A549 (cell line): ENCODE measurements at regions of chr20 and their contacts with region 1.

Region 1: GRCh38 chr20:38057351-38057972 is 23.9 kb downstream of the RPRD1B start:
- DNase-seq: peak; percentile 81 to 82
- ATAC-seq: peak; percentile 94 to 99
- H3K4me3 ChIP-seq: no peak overlapping the region
- H3K27ac ChIP-seq: peak overlapping the region; percentile 29 to 47; a peak in 1 of 6 replicates
- H3K4me1 ChIP-seq: peaks cover 26% of the 10 kb centered on the region
- CTCF ChIP-seq: peak; percentile 96
- EP300 ChIP-seq: no peak
- POLR2A ChIP-seq: no peak
- RAD21 ChIP-seq: peak; percentile 96 to 98

Region 2: GRCh38 chr20:38043512-38044300 is 13.8 kb before region 1 on chr20:
- CTCF ChIA-PET with region 1: interaction called, 37 read pairs
- POLR2A ChIA-PET with region 1: interaction called, 3 read pairs
- DNase-seq: peak; percentile 73 to 80
- ATAC-seq: peak; percentile 99 to 100
- H3K4me3 ChIP-seq: no peak overlapping the region
- H3K27ac ChIP-seq: peak overlapping the region in 1 of 2 experiments; percentile 41; a peak in 2 of 6 replicates
- H3K4me1 ChIP-seq: peaks cover 15% of the 10 kb centered on the region
- CTCF ChIP-seq: no peak
- EP300 ChIP-seq: no peak
- POLR2A ChIP-seq: no peak
- RAD21 ChIP-seq: no peak

Region 3: GRCh38 chr20:38079353-38079752 is 21.9 kb after region 1 on chr20:
- CTCF ChIA-PET with region 1: interaction called, 12 read pairs
- POLR2A ChIA-PET with region 1: no interaction called
- DNase-seq: no peak
- ATAC-seq: no peak
- H3K4me3 ChIP-seq: no peak overlapping the region
- H3K27ac ChIP-seq: no peak overlapping the region
- H3K4me1 ChIP-seq: peaks cover 8% of the 10 kb centered on the region; the same call in 2 of the 3 replicates
- CTCF ChIP-seq: no peak
- EP300 ChIP-seq: no peak
- POLR2A ChIP-seq: no peak
- RAD21 ChIP-seq: no peak

Region 4: DNA sequence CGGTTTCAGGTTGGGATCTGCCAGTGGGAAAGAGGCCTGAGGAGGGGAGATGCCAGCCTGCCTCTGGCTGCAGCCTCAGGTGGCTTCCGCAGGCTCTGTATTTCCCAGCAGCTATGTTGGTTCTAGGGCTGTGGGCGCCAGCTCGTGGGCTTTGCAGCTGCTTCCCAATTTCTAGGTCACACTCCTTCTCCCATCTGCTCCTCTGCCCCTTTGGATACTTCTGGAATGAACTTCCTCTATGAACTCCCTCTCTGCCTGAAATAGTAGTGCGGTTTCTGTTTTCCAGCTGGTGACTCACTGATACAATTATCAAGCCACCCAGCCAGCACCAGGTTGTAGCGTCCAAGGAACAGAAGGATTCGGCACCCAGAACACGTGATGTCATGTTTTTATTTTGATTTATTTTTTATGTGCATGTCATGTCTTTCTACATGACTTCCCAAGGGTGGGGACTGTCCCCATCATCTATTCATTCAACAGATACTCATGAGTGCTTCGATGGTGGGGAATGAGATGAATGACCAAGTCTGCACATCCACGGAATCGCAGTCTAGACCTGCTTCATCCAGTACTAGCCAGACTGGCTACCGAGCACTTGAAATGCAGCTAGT is 69.7 kb after region 1 on chr20:
- CTCF ChIA-PET with region 1: interaction called, 13 read pairs
- POLR2A ChIA-PET with region 1: interaction called, 3 read pairs
- DNase-seq: peak; percentile 52 to 58
- ATAC-seq: peak; percentile 39 to 45; a peak in 4 of 6 replicates
- H3K4me3 ChIP-seq: no peak overlapping the region
- H3K27ac ChIP-seq: peak overlapping the region; percentile 61 to 82
- H3K4me1 ChIP-seq: peaks cover 55% of the 10 kb centered on the region
- CTCF ChIP-seq: no peak
- EP300 ChIP-seq: no peak
- POLR2A ChIP-seq: no peak
- RAD21 ChIP-seq: no peak

Region 5: GRCh38 chr20:38152621-38153231 is 95.3 kb after region 1 on chr20:
- CTCF ChIA-PET with region 1: interaction called, 182 read pairs
- POLR2A ChIA-PET with region 1: interaction called, 5 read pairs
- DNase-seq: peak; percentile 72 to 74
- ATAC-seq: peak; percentile 60 to 72
- H3K4me3 ChIP-seq: 0 out of 3 replicates have a peak overlapping the region, but pooled peaks have one; percentile 4
- H3K27ac ChIP-seq: peak overlapping the region; percentile 84 to 87
- H3K4me1 ChIP-seq: peaks cover 78% of the 10 kb centered on the region
- CTCF ChIP-seq: no peak
- EP300 ChIP-seq: peak in 1 of 2 experiments; percentile 19; a peak in 1 of 5 replicates
- POLR2A ChIP-seq: no peak
- RAD21 ChIP-seq: no peak

Region 6: DNA sequence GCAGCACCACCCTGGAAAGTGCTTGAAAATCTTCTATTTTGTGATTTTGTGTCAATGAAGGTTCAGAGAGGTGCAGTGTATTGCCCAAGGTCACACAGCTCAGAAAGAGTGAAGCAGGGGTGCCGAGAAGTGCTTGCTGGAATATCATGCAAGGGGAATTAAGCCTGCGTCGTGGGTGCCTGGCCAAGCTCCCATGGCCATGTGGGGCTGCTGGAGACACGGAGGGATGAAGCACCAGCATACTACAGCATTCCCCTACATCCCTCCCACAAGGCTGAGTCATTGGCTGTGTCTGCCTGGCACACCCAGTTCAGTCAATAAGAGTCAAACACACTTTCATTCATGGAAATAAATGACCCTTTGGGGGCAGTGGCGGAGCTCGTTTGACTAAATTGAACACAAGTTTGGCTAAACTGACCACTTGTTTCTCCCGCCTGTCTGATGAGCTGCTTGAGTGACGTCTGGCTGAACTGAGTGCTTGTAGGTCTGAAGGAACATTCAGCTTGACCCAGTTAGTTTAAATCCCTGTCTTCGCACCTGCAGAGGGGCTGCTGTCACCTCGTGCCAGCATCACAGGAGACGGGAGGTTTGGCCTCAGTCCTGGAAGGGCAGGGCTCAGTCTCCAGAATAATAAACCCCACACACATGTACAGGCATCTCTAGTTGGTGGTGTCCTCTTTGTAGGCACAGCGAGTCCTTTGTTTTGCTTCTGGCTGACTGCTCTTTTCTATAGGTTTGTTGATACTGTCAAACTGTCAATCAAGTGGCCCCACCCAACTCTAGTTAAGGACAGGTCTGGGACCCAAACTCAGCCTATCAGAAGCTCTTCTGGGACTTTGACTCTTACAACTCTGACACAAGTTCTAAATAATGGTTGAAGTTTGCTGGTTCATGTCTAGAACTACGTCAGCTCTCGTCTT is 116.0 kb after region 1 on chr20:
- CTCF ChIA-PET with region 1: interaction called, 182 read pairs
- POLR2A ChIA-PET with region 1: no interaction called
- DNase-seq: peak; percentile 92 to 95
- ATAC-seq: peak; percentile 85 to 93
- H3K4me3 ChIP-seq: no peak overlapping the region
- H3K27ac ChIP-seq: peak overlapping the region; percentile 91 to 93
- H3K4me1 ChIP-seq: peaks cover 58% of the 10 kb centered on the region
- CTCF ChIP-seq: peak; percentile 45
- EP300 ChIP-seq: peak in 1 of 2 experiments; percentile 51; a peak in 2 of 5 replicates
- POLR2A ChIP-seq: peak; percentile 37; the same call in 1 of the 2 replicates
- RAD21 ChIP-seq: peak; percentile 58 to 75